Activated CD8-positive, alpha-beta T cell treated with anti-CD3 and anti-CD28 coated beads, Interleukin-2, amount 10 ng/mL, durations not matched to agents 7 days and 5 days (primary cell): ENCODE measurements at regions of chr7 and their contacts with region 1.

Region 1: GRCh38 chr7:151782598-151783448 is 94.1 kb downstream of the PRKAG2 start:
- DNase-seq: peak; percentile 83
- ATAC-seq: peak; percentile 97
- H3K4me3 Mint-ChIP-seq: peak overlapping the region; percentile 66
- H3K27ac Mint-ChIP-seq: peak overlapping the region; percentile 92
- H3K4me1 Mint-ChIP-seq: peaks cover 14% of the 10 kb centered on the region
- H3K27me3 Mint-ChIP-seq: no peaks in the 10 kb centered on the region

Region 2: DNA sequence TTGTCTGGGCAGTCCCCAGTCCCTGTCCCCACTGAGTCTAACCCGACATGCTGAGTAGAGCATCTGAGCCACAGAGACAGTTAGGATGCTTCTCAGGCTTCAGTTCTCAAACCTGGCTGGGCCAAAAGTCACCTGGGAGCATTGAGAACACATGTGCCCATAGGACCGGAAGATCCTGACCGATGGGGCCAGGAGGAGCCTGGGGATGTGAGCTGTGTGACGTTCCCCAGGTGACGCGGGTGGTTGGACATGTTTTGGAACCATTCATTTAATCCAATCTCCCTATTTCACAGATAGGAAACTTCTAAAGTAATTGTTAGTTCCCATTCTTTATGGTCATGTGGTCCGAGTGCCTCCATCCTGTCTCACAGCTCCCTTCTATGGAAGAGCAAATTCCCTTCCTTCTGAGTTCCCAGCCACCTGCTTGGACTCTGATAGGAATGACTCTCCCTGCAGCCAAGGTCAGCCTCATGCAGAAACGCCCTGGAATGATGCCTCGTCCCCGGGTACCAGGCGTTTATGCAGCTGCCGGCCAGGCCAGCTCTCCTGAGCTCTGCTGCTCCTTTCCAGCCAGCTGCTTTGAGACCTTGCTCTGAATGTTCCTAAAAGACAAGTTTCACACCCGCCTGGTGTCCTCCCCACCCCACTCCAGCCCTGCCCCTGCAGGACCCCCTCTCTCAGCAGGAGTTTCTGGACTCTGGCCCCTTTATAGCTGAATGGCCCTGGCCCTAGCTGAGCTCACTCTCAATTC is 96.6 kb before region 1 on chr7:
- CTCF ChIA-PET with region 1: interaction called, 10 read pairs
- POLR2A ChIA-PET with region 1: no interaction called
- DNase-seq: no peak
- ATAC-seq: no peak
- H3K4me3 Mint-ChIP-seq: no peak overlapping the region
- H3K27ac Mint-ChIP-seq: no peak overlapping the region
- H3K4me1 Mint-ChIP-seq: no peaks in the 10 kb centered on the region
- H3K27me3 Mint-ChIP-seq: no peaks in the 10 kb centered on the region

Region 3: DNA sequence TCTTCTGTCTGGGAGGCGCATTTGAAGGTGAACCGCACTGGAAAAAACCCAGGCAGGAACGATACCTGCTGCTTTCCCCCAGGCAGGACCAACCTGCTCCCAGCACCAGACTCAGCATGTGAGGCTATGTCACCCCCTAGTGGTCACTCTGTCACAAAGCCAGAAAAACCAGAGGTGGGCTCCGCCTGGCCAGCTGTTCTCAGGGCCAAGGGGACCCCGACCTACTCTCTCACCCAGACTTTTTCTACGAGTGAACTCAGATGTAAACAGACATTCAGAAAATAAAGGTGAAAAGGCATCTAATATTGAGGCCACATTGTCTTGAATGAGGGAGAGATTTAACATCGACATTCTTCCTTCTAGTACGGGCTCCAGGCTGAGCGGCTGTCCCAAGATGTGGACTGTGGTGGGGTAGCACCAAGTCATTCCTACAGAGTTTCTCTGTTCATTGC is 23.2 kb before region 1 on chr7:
- CTCF ChIA-PET with region 1: interaction called, 37 read pairs
- POLR2A ChIA-PET with region 1: interaction called, 4 read pairs
- DNase-seq: peak; percentile 75
- ATAC-seq: peak; percentile 59
- H3K4me3 Mint-ChIP-seq: no peak overlapping the region
- H3K27ac Mint-ChIP-seq: peak overlapping the region; percentile 49
- H3K4me1 Mint-ChIP-seq: peaks cover 35% of the 10 kb centered on the region
- H3K27me3 Mint-ChIP-seq: no peaks in the 10 kb centered on the region

Region 4: GRCh38 chr7:151795168-151795811 is 12.5 kb after region 1 on chr7:
- CTCF ChIA-PET with region 1: interaction called, 22 read pairs
- POLR2A ChIA-PET with region 1: no interaction called
- DNase-seq: peak; percentile 27
- ATAC-seq: peak; percentile 33
- H3K4me3 Mint-ChIP-seq: no peak overlapping the region
- H3K27ac Mint-ChIP-seq: no peak overlapping the region
- H3K4me1 Mint-ChIP-seq: peaks cover 2% of the 10 kb centered on the region
- H3K27me3 Mint-ChIP-seq: no peaks in the 10 kb centered on the region